ENCODE measurements at regions of chr17 and their contacts with region 1.

Region 1: GRCh38 chr17:69060822-69061221 is at the start of gene ABCA9:
- DNase-seq: no peak
- H3K4me3 ChIP-seq: no peak within 1 kb of the TSS
- H3K27ac ChIP-seq: no peak within 1 kb of the TSS
- H3K4me1 ChIP-seq: no peaks in the 10 kb centered on the region
- H3K27me3 ChIP-seq: no peaks in the 10 kb centered on the region
- CTCF ChIP-seq: no peak
- total RNA-seq, gene ABCA9: 0.31 to 1.8 TPM

Region 2: GRCh38 chr17:68542698-68543463 is 517.9 kb before region 1 on chr17:
- CTCF ChIA-PET with region 1: no interaction called
- dilution Hi-C with region 1: no loop called
- in situ Hi-C with region 1: no loop called
- intact Hi-C with region 1: no loop called
- DNase-seq: no peak
- H3K4me3 ChIP-seq: no peak overlapping the region
- H3K27ac ChIP-seq: no peak overlapping the region
- H3K4me1 ChIP-seq: no peaks in the 10 kb centered on the region
- H3K27me3 ChIP-seq: no peaks in the 10 kb centered on the region
- CTCF ChIP-seq: no peak

Region 3: DNA sequence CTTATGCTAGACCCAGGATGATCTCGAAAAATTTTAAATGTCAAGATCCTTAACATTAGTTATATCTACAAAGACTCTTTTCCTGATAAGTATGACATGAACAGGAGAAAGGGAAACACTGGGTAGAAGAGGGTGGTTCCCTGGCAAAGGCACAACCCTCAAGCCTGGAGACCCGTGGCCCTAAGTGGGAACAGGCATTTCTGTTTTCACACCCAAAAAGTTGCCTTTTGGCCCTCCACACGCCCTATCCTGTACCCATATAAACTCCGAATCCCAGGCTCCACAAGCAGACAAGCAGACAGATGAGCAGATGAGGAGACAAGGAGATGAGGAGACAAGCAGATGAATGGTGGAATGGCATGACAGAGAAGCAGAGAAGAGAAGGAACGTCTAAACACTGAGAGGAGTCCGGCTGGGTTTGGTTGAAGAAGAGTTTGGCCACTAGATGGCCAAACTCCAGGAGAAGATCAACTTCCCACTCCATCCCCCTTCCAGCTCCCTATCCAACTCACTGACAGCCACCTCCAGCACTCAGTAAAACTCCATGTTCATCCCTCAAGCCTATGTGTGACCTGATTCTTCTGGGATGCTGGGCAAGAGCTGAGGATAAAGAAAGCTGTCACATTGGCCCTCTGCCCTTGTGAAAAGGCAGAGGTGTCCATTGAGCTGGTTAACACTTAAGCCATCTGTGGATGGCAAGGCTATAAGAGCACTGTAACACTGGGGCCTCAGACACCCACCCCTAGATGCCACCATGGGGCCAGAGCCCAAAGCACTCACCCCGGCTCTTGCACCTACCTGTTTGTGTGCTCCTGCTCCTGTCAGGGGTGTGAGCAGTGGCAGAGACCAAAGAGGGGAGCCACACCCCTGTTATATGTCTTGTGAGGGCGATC is 320.0 kb before region 1 on chr17:
- CTCF ChIA-PET with region 1: no interaction called
- dilution Hi-C with region 1: no loop called
- in situ Hi-C with region 1: no loop called
- intact Hi-C with region 1: no loop called
- DNase-seq: no peak
- H3K4me3 ChIP-seq: no peak overlapping the region
- H3K27ac ChIP-seq: no peak overlapping the region
- H3K4me1 ChIP-seq: no peaks in the 10 kb centered on the region
- H3K27me3 ChIP-seq: no peaks in the 10 kb centered on the region
- CTCF ChIP-seq: no peak

Region 4: GRCh38 chr17:69045646-69046463 is 15.0 kb before region 1 on chr17:
- CTCF ChIA-PET with region 1: no interaction called
- dilution Hi-C with region 1: no loop called
- in situ Hi-C with region 1: no loop called
- intact Hi-C with region 1: no loop called
- DNase-seq: no peak
- H3K4me3 ChIP-seq: no peak overlapping the region
- H3K27ac ChIP-seq: no peak overlapping the region
- H3K4me1 ChIP-seq: peaks cover 4% of the 10 kb centered on the region
- H3K27me3 ChIP-seq: no peaks in the 10 kb centered on the region
- CTCF ChIP-seq: no peak

Region 5: DNA sequence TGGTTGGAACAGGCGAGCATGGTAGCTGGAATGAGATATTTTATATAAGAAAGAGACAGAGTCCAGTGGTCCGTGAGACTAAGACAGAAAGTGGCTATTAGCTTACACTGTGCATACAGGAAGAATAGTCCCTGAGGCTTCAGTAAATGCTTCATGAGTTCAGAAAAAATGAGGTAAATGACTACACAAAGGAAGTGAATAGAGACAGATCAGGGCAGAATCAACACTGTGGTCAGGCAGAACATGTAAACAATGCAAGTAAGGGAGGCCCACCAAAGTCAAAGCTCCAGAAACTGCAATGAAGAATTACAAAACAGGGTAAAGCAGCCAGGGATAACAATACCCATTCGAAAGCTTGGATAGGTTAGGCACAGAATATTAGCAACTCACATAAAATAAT is 163.0 kb after region 1 on chr17:
- CTCF ChIA-PET with region 1: no interaction called
- dilution Hi-C with region 1: no loop called
- in situ Hi-C with region 1: loop called (anchors 10 to 25 kb)
- intact Hi-C with region 1: no loop called
- DNase-seq: no peak
- H3K4me3 ChIP-seq: no peak overlapping the region
- H3K27ac ChIP-seq: no peak overlapping the region
- H3K4me1 ChIP-seq: peaks cover 6% of the 10 kb centered on the region
- H3K27me3 ChIP-seq: no peaks in the 10 kb centered on the region
- CTCF ChIP-seq: no peak

Measured in mammary epithelial cell (primary cell).